K562 (cell line): ENCODE measurements at regions of chr16 and their contacts with region 1.

Region 1: DNA sequence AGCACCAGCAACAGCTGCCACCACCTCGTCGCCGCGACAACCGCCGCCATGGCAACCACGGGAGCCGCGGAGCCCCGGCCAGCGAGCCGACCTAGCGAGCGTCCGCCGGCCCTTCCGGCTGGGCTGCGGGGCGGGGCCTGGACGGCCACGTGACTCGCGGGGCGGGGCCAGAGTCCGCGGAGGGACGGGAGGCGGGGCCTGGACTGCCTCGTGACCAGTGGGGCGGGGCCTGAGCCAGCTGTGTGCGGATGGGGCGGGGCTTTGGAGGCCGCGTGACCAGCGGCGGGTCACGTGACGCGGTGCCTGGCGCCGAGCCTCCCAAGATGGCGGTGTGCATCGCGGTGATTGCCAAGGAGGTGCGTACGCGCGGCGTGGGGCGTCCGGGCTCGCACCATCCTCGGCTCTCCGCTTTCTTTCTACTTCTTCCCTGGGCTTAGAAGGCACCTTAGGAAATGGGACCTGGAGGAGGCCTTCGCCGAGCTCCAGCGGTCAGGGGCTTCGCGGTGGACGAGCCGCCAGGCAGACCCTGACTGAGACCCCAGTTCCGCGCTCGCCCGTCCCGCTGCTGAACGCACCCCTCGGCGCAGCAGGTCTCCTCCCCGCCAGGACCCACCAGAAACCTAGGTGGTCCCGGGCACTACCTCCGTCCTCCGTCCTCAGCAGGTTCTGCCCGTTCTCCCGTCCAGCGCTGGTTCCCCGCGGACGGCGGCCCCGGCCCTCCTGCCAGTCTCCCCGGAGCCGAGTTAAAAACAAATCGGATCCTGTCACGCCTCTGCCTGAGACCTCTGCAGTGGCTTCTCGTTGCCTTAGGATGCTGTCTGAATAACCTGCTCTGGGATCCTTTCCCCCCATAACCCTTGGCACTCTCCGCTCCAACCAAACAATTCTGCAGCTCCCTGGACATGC is at the starts of genes GALNS and TRAPPC2L:
- DNase-seq: peak; percentile 96 to 99 (median 99)
- ATAC-seq: peak; percentile 95
- H3K4me3 ChIP-seq: peak within 1 kb of the TSS; percentile 69
- H3K27ac ChIP-seq: peak within 1 kb of the TSS; percentile 31
- H3K4me1 ChIP-seq: peaks cover 8 to 46% of the 10 kb centered on the region in 2 experiments
- H3K27me3 ChIP-seq: no peaks in the 10 kb centered on the region
- CTCF ChIP-seq: no peak
- EP300 ChIP-seq: no peak
- POLR2A ChIP-seq: peak; percentile 78
- RAD21 ChIP-seq: no peak
- polyA plus RNA-seq, gene GALNS: 0.38 to 0.63 TPM
- polyA plus RNA-seq, gene TRAPPC2L: 345 to 398 TPM

Region 2: DNA sequence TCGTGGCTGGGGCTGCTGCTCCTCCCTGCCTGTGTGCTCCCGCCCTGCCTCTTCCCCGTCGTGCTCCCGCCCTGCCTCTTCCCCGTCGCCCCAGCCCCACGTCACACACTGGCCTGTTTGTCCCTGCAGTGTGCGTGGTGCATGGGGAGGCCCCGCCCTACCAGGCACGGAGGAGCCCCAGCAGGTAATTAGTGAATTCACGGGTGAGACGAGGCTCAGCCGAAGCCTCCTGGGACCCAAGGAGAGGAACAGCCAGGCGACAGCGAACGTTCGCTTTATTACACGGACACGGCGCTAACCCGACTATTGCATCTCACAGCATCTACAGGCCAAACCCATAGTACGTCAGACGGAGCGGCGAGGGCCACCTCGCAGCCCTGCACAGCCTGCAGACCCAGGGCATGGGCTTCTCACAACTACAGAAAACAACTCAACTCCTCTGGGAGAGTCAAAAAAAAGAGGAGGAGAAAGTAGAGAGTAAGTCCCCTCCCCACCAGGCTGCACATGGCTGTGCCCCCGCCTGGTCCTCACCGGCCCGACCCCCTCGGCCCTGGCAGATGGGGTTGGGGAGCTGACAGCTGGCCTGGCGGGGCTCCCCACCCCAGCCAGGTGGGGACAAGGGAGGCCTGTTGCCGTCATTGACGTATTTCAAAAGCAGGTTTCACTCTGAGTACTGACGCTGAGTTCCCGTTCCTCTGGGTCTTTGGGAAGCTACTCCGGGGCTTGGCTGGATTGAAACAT is 13.7 kb after region 1 on chr16:
- CTCF ChIA-PET with region 1: no interaction called
- POLR2A ChIA-PET with region 1: interaction called, 10 read pairs
- in situ Hi-C with region 1: no loop called
- intact Hi-C with region 1: no loop called
- DNase-seq: peak; percentile 45 to 62 (median 57)
- ATAC-seq: peak; percentile 71
- H3K4me3 ChIP-seq: no peak overlapping the region
- H3K27ac ChIP-seq: peak overlapping the region; percentile 39; the same call in 2 of the 3 replicates
- H3K4me1 ChIP-seq: peaks cover 14 to 72% of the 10 kb centered on the region in 2 experiments; a peak in 4 of 5 replicates
- H3K27me3 ChIP-seq: no peaks in the 10 kb centered on the region
- CTCF ChIP-seq: no peak
- EP300 ChIP-seq: no peak
- POLR2A ChIP-seq: peak; percentile 31; the same call in 1 of the 2 replicates
- RAD21 ChIP-seq: no peak

Region 3: DNA sequence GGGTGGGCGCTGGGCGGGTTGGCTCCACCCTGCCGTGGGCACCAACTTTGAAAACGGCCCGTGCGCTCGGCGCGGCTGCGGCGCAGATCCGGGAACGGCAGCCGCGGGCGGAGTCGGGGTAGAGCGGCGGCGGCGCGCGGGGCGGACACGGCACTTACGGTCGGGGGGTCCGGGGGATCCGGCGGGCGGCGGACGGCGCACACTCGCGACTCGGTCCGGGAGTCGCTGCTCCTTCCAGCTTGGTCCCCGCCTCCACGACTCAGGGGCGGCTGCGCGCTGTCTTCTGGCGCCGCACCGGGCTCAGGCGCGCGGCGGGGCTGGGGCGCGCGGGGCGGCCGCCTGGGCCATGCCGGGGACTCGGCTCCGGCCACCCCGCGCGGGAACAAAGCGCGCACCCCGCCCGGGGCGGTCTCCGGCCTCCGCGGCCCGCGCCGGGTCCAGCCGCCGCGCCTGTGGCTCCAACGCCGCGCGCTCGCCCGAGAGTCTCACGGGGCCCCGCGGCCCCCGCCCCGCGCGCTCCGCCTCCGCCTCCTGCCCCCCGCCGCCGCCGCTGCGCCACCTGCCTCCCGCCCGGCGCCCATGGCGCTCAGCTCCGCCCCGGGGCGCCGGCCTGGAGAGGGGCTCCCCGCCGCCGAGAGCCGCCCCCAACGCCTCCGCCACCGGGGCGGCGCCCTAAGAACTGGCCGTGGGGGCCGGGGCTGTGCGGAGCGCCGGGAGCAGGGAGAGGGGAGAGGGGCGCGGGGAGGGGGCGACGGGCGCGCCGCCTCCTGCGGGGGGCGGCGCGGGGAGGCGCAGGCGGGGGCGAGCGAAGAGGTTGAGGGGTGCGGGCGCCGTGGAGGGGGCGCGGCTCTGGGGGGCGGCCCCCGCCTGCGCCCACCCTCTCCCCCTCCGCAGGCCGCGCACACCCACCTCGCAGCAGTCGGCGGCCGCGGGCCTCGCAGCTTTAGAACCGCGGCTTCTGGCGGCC is 84.1 kb after region 1 on chr16:
- CTCF ChIA-PET with region 1: no interaction called
- POLR2A ChIA-PET with region 1: no interaction called
- in situ Hi-C with region 1: no loop called
- intact Hi-C with region 1: no loop called
- DNase-seq: no peak
- ATAC-seq: no peak
- H3K4me3 ChIP-seq: no peak overlapping the region
- H3K27ac ChIP-seq: no peak overlapping the region
- H3K4me1 ChIP-seq: peaks cover 0 to 67% of the 10 kb centered on the region in 2 experiments; a peak in 2 of 5 replicates
- H3K27me3 ChIP-seq: no peaks in the 10 kb centered on the region
- CTCF ChIP-seq: no peak
- EP300 ChIP-seq: no peak
- POLR2A ChIP-seq: no peak
- RAD21 ChIP-seq: no peak